ENCODE measurements at regions of chr4 and their contacts with region 1.

Region 1: DNA sequence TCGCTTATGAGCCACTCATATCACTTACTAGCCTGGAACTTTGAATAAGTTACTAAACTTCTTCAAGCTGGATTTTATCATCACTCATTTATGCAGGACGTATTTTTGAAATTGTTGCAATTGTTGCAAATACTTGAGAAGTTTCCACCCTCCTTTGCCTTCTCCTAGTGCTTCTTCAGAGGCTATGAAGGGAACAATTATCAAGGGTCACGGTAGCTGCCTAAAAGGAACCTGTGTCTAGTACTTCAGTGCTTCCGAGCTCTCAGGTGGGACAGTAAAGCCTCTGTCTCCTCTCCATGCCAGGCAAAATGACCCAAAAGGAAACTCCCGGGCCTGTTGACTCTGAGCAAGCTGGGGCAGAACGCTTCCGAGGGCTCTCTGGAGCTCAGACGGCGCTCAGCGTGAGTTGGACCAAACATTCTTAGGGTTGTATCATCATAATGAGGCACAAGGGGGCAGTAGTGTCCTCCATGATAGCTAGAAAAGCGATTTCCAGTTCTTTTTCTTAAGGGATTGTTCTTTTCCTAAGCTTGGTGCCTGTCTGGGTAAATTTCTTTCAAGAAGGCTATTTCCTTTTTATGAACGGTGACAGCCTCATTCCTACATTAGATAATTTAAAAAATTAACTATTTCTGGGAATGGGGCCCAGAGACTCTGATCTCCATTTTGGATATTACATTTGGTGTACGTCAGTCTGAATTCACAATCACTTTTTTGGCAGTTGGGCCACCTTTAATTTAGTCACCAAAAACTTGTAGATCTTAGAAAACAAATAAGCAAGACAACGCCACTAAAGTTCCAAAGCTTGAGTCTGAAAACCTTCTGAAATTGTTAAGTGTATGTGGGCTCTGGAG is 73.1 kb downstream of the PACRGL start:
- H3K4me3 ChIP-seq: no peak overlapping the region
- H3K27ac ChIP-seq: no peak overlapping the region
- H3K4me1 ChIP-seq: no peaks in the 10 kb centered on the region
- CTCF ChIP-seq: 0 out of 2 replicates have a peak, but pooled peaks have one; percentile 44

Region 2: DNA sequence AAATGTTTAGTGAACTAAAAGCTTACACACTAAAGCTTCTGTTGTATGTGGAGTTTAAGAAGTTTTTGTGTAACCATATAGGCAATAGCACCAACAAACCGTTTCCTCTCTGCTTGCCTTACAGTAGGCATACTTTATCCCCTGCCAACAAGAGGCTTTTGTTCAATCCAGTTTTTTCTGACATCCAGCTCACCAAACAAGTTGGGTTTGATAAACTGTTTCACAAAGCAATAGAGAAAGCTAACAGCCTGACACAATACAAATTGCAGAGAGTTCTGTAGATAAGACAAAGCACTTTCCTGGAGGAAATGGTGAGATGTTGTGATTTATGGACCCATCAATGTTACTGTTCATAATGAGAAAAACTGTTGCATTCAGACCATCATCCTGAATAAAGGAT is 19.3 kb before region 1 on chr4:
- CTCF ChIA-PET with region 1: interaction called, 11 read pairs
- POLR2A ChIA-PET with region 1: no interaction called
- H3K4me3 ChIP-seq: no peak overlapping the region
- H3K27ac ChIP-seq: no peak overlapping the region
- H3K4me1 ChIP-seq: no peaks in the 10 kb centered on the region
- CTCF ChIP-seq: no peak

Region 3: GRCh38 chr4:21134994-21135393 is 361.6 kb after region 1 on chr4:
- CTCF ChIA-PET with region 1: interaction called, 21 read pairs
- POLR2A ChIA-PET with region 1: no interaction called
- H3K4me3 ChIP-seq: no peak overlapping the region
- H3K27ac ChIP-seq: no peak overlapping the region
- H3K4me1 ChIP-seq: no peaks in the 10 kb centered on the region
- CTCF ChIP-seq: no peak